GM10248 (cell line): ENCODE measurements at regions of chr3 and their contacts with region 1.

Region 1: GRCh38 chr3:28739647-28740046 is 391.0 kb upstream of the AZI2 start:
- DNase-seq: no peak
- CTCF ChIP-seq: no peak

Region 2: GRCh38 chr3:28726840-28727239 is 12.8 kb before region 1 on chr3:
- CTCF ChIA-PET with region 1: interaction called, 12 read pairs
- POLR2A ChIA-PET with region 1: no interaction called
- DNase-seq: peak; percentile 24
- CTCF ChIP-seq: peak; percentile 29

Region 3: DNA sequence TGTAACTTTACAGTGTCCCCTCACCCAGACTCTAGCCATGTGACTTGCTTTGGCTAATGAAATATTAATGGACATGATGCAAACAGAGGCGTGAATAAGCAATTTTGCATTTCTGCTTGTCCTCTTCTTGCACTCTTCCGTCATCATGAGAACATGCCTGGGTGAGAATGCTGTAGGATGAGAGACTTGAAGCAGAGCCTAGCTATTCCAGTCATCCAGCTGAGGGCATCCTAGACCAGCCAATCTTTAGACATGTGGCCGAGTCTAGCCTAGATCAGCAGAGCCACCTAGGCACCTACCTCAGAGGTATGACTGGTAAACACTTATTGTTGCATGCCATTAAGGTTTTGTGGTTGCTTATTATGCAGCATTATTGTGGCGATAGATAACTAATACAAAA is 59.4 kb after region 1 on chr3:
- CTCF ChIA-PET with region 1: no interaction called
- POLR2A ChIA-PET with region 1: no interaction called
- DNase-seq: no peak
- CTCF ChIP-seq: no peak